HepG2 (cell line): ENCODE measurements at regions of chr7 and their contacts with region 1.

Region 1: DNA sequence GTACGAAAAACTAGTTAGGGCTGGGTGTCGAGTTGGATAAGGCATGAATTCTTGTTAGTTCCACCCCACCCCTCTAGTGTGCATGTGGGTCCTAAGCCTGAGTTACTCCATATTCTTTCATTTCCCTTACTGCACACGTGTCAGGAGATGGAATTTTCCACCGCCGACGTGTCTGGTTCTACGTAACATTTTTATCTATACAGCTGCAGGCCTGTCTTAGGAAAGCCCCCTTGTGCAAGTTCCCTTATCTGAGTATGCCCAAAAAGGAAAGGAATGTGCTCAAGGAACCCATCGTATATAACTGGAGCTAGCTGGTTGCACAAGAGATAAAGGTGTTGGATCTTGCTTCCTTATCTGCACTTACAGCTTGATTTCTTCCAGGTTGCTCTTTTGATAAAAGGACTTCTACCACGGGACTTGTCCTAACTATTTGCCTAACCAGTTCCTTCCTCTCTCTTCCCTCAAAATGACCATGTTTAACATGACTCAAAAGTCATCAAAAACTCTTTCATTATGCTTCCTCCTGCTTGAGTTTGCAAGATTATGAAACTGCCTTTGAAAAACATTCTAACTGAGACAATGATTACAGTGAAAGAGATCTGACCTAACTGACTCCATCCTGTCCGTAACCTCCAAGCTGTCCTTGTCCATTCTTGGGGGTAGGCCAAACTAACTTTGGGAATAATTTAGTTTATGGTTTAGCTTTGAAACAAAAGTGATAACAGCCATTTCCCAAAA is 181.4 kb downstream of the AKR1D1 start:
- DNase-seq: peak; percentile 99
- ATAC-seq: peak; percentile 95
- H3K4me3 ChIP-seq: no peak overlapping the region
- H3K27ac ChIP-seq: peak overlapping the region; percentile 93
- H3K4me1 ChIP-seq: peaks cover 43% of the 10 kb centered on the region
- H3K27me3 ChIP-seq: no peaks in the 10 kb centered on the region
- CTCF ChIP-seq: no peak
- EP300 ChIP-seq: peak; percentile 91 to 98
- POLR2A ChIP-seq: no peak
- RAD21 ChIP-seq: peak; percentile 83

Region 2: GRCh38 chr7:138245682-138246081 is 11.9 kb before region 1 on chr7:
- CTCF ChIA-PET with region 1: no interaction called
- POLR2A ChIA-PET with region 1: interaction called, 18 read pairs
- in situ Hi-C with region 1: no loop called
- intact Hi-C with region 1: no loop called
- DNase-seq: peak; percentile 97
- ATAC-seq: peak; percentile 96
- H3K4me3 ChIP-seq: no peak overlapping the region; a peak in 1 of 6 replicates
- H3K27ac ChIP-seq: peak overlapping the region; percentile 80
- H3K4me1 ChIP-seq: peaks cover 54% of the 10 kb centered on the region
- H3K27me3 ChIP-seq: no peaks in the 10 kb centered on the region
- CTCF ChIP-seq: no peak
- EP300 ChIP-seq: peak; percentile 84 to 96; a peak in 3 of 4 replicates
- POLR2A ChIP-seq: no peak
- RAD21 ChIP-seq: no peak